CD4-positive, alpha-beta memory T cell (primary cell): ENCODE measurements at regions of chr2 and their contacts with region 1.

Region 1: DNA sequence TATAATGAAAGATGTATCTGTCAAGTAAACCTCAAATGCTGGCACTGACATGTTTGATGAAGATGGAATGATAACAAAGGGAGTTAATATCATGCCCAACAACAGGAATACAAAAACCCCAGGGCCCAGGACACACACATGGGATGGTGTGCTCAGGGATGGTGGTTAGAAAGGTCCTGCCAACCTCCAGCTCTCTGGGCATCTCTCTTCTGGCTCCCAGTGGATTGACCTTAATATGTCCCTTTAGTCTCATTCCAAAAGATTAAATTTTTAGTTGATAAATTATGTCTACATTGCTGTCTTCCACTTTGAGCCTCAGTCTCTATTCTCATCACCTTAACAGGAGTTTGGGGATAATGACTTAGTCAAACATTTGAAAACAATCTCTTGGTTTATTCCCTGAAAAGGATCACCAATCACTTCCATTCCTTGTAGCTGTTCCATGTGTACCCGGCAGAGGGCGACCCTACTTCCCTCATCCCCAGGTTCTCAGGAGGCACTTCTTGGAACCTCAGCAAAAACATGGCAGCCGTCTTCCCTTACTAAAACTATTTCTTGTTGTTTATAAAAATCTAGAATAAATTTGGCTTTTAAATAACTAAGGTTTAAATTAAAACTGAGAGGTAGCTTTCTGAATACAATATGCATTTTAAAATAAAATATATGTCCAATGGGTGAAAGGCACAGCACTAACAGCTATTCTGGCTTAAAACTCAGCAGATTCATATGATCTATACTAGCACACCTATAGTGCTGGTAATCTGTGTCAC is 29.6 kb downstream of the MCEE start:
- DNase-seq: peak; percentile 6 to 55 (median 19)
- H3K4me3 ChIP-seq: no peak overlapping the region
- H3K4me3 Mint-ChIP-seq: no peak overlapping the region
- H3K27ac ChIP-seq: no peak overlapping the region
- H3K27ac Mint-ChIP-seq: no peak overlapping the region
- H3K4me1 ChIP-seq: no peaks in the 10 kb centered on the region
- H3K4me1 Mint-ChIP-seq: peaks cover 0 to 2% (median 0%) of the 10 kb centered on the region in 4 donors
- H3K27me3 ChIP-seq: no peaks in the 10 kb centered on the region
- H3K27me3 Mint-ChIP-seq: peaks cover 0 to 4% of the 10 kb centered on the region in 2 donors

Region 2: DNA sequence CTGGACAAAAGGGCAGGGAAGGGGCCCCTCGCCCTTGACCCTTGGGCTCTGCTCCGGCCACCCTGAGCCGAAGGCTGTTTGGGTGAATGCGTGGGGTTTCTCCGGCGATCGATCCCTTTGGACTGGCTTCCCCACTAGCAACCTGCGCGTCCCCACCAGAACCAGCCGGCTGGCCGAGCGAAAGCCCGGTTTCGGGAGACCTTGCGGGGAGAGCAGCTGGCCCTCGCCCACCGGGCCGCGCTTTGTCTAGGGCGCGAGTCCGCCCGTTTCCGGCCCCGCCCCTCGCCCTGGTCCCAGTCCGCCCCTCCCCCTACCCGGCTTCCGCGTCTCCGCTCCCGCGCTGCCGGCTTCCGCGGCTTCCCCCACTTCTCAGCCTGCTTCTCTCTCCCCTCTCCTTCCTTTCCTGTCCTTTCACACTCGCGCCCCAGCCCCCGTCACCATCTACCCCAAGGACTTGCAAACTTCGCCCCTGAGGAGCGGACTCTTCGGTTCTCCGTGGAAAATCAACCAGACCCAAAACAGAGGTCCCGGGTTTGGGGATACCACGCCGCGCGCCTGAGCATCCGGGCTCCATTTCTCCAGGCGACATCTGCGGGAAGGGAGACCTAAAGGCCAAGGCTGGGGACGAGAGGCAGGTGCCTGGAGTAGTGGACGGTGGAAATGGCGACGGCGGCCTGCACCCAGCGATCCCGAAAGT is 212.7 kb before region 1 on chr2:
- CTCF ChIA-PET with region 1: no interaction called
- POLR2A ChIA-PET with region 1: no interaction called
- intact Hi-C with region 1: no loop called
- DNase-seq: no peak
- H3K4me3 ChIP-seq: peak overlapping the region in 1 of 2 donors; percentile 35
- H3K4me3 Mint-ChIP-seq: peak overlapping the region; percentile 43 to 88 (median 78)
- H3K27ac ChIP-seq: no peak overlapping the region
- H3K27ac Mint-ChIP-seq: no peak overlapping the region
- H3K4me1 ChIP-seq: peaks cover 29% of the 10 kb centered on the region
- H3K4me1 Mint-ChIP-seq: peaks cover 15 to 31% (median 23%) of the 10 kb centered on the region in 4 donors
- H3K27me3 ChIP-seq: peaks cover 65% of the 10 kb centered on the region
- H3K27me3 Mint-ChIP-seq: peaks cover 56 to 66% of the 10 kb centered on the region in 2 donors

Region 3: GRCh38 chr2:70960369-70960811 is 140.0 kb before region 1 on chr2:
- CTCF ChIA-PET with region 1: no interaction called
- POLR2A ChIA-PET with region 1: no interaction called
- intact Hi-C with region 1: no loop called
- DNase-seq: no peak
- H3K4me3 ChIP-seq: no peak overlapping the region
- H3K4me3 Mint-ChIP-seq: no peak overlapping the region
- H3K27ac ChIP-seq: no peak overlapping the region
- H3K27ac Mint-ChIP-seq: peak overlapping the region in 1 of 7 donors; percentile 56
- H3K4me1 ChIP-seq: peaks cover 5% of the 10 kb centered on the region
- H3K4me1 Mint-ChIP-seq: peaks cover 3 to 10% (median 6%) of the 10 kb centered on the region in 4 donors
- H3K27me3 ChIP-seq: peaks cover 9% of the 10 kb centered on the region
- H3K27me3 Mint-ChIP-seq: peaks cover 19 to 41% of the 10 kb centered on the region in 2 donors

Region 4: DNA sequence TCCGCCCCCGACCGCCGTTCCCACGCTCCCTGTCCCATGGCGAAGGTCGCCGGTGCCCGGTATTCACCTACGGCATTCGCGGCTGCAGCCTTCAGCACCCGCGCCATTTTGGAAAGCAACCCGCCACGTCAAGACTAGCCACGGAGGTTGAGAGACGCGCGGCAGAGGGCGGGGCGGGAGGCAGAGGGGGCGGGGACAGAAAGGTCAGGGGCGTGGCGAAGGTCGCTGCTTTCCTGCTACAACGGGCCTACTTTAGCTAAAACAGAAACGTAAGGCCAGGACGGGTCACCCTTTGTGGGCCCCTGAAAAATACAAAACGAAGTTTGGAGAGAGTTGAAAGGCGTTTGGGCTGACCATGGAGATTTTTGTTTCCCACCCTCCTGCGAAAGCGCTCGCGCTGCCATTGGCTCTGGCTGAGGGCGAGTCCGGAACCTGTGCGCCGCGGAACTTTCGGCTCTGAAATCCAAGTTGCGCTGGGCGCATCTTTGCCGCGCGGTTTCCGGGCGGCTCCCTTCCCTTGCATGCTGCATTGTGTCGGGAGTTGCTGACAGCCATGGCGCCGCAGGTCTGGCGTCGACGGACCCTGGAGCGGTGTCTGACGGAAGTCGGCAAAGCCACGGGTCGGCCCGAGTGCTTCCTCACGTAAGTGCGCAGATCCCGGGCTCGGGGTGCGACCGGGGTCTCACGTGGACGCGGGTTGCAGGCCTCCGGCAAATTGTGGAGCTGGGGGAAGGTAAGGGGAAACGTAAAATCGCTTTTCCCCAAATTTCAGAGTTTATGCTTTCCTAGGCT is 29.9 kb after region 1 on chr2 and contains the starts of genes MCEE and MPHOSPH10:
- CTCF ChIA-PET with region 1: interaction called, 17 read pairs
- POLR2A ChIA-PET with region 1: interaction called, 3 read pairs
- intact Hi-C with region 1: no loop called
- DNase-seq: peak; percentile 88 to 92 (median 90)
- H3K4me3 ChIP-seq: peak within 1 kb of the TSS; percentile 88 to 91
- H3K4me3 Mint-ChIP-seq: no peak within 1 kb of the TSS
- H3K27ac ChIP-seq: peak within 1 kb of the TSS; percentile 77
- H3K27ac Mint-ChIP-seq: no peak within 1 kb of the TSS
- H3K4me1 ChIP-seq: peaks cover 38% of the 10 kb centered on the region
- H3K4me1 Mint-ChIP-seq: peaks cover 11 to 22% (median 15%) of the 10 kb centered on the region in 4 donors
- H3K27me3 ChIP-seq: no peaks in the 10 kb centered on the region
- H3K27me3 Mint-ChIP-seq: no peaks in the 10 kb centered on the region
- total RNA-seq, gene MCEE: 27.1 to 30.0 TPM
- total RNA-seq, gene MPHOSPH10: 50.6 to 54.2 TPM

Region 5: GRCh38 chr2:71157124-71157793 is 56.9 kb after region 1 on chr2:
- CTCF ChIA-PET with region 1: interaction called, 10 read pairs
- POLR2A ChIA-PET with region 1: no interaction called
- intact Hi-C with region 1: no loop called
- DNase-seq: peak in 4 of 5 donors; percentile 32 to 46 (median 40)
- H3K4me3 ChIP-seq: no peak overlapping the region
- H3K4me3 Mint-ChIP-seq: peak overlapping the region in 1 of 8 donors; percentile 35
- H3K27ac ChIP-seq: no peak overlapping the region
- H3K27ac Mint-ChIP-seq: no peak overlapping the region
- H3K4me1 ChIP-seq: peaks cover 8% of the 10 kb centered on the region
- H3K4me1 Mint-ChIP-seq: peaks cover 2 to 9% (median 9%) of the 10 kb centered on the region in 4 donors
- H3K27me3 ChIP-seq: no peaks in the 10 kb centered on the region
- H3K27me3 Mint-ChIP-seq: peaks cover 9 to 11% of the 10 kb centered on the region in 2 donors